Heart right ventricle (tissue), 16 donors: ENCODE measurements at regions of chr4 and their contacts with region 1.

Region 1: GRCh38 chr4:20754036-20754435 is 53.8 kb downstream of the PACRGL start:
- DNase-seq: no peak
- ATAC-seq: no peak
- H3K4me3 ChIP-seq: no peak overlapping the region
- H3K27ac ChIP-seq: no peak overlapping the region
- H3K4me1 ChIP-seq: no peaks in the 10 kb centered on the region
- H3K27me3 ChIP-seq: no peaks in the 10 kb centered on the region
- CTCF ChIP-seq: no peak

Region 2: DNA sequence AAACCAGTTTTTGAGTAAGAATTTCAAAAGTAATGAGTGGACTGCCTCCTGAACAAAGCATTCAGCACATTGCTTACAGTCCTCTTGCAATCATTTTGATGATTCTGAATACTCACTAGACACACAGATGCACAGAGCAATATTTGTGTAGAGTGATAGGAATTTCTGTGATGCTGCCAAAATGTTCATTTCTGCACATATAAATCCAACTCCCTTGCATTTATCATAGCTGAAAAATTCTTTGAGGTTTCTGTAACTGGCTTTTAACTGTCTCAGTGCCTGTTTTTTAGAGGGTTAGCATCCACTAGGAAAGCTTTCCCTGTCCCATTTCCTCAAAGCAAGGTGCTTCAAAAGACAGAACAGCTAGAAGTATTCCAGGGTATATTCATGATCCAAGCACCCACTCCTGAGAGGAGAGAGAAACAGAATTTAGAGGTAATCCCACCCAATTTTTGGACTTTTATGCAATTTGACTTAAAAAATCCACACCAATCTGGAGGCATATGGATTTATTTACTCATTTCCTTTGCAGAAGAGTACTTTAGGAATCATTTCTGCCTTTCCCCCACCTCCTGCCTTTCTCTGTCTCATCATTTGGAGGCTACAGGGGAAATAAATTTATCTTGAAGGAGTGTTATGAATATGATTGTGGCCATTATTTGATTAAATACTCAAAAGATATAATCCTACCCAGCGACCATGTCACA is 736.8 kb before region 1 on chr4:
- intact Hi-C with region 1: loop called in 1 of 10 experiments (anchors 10 kb)
- DNase-seq: no peak
- ATAC-seq: no peak
- H3K4me3 ChIP-seq: no peak overlapping the region
- H3K27ac ChIP-seq: no peak overlapping the region
- H3K4me1 ChIP-seq: no peaks in the 10 kb centered on the region
- H3K27me3 ChIP-seq: no peaks in the 10 kb centered on the region
- CTCF ChIP-seq: no peak

Region 3: DNA sequence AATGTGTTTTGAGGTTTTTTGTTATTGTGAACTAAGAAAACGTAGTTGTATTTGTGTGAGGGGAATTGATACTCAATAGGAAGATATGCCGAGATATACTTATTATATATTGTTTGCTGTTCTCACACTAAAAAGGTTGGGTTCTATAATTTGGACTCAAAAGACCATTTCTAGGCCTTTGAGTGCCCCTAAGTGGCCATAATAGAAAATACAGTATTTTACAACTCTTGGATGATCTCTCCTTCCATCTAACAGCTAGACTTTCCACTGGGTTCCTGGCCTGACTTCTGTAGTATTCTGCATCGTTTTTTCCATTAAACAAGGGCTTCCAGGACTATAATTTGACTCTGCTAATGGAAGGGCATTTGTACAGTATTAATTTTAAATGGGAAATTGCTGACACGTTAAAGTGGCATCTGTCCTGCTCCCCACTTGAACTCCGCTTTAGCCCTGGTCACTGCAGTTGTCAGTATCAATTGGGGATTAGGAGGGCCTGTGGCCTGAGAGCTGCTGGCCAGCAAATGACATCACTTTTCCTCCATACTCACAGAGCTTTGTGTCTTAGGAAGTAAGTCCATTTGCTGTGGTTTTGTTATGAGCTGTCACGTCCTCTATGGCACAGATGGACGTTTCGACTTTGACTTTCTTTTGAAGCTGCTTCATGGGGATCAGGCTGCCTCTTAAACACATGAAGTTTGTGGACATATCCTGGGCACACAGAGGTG is 325.4 kb before region 1 on chr4:
- intact Hi-C with region 1: no loop called
- DNase-seq: no peak
- ATAC-seq: no peak
- H3K4me3 ChIP-seq: no peak overlapping the region
- H3K27ac ChIP-seq: no peak overlapping the region
- H3K4me1 ChIP-seq: no peaks in the 10 kb centered on the region
- H3K27me3 ChIP-seq: no peaks in the 10 kb centered on the region
- CTCF ChIP-seq: peak in 3 of 9 donors; percentile 11 to 31 (median 22)

Region 4: GRCh38 chr4:20506827-20507226 is 247.2 kb before region 1 on chr4:
- intact Hi-C with region 1: no loop called
- DNase-seq: no peak
- ATAC-seq: no peak
- H3K4me3 ChIP-seq: no peak overlapping the region
- H3K27ac ChIP-seq: no peak overlapping the region
- H3K4me1 ChIP-seq: no peaks in the 10 kb centered on the region
- H3K27me3 ChIP-seq: no peaks in the 10 kb centered on the region
- CTCF ChIP-seq: no peak

Region 5: DNA sequence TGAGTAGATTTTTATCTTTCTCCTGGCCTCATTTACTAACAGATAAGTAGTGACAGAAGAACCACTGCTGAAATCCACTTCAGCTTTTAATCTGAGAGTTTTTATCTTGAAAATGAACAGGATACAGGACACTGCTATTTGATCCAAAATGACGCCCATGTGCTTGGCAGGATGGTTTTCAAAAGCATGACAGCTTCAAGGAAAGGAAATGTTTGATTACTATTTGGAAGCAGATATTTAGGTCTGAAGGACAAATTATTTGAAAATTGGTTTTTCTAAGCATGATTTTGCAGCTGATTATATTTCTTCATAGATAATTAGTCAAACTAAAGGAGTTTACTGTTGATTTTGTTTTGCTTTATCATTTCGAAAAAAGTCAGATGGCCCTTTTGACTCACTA is 42.7 kb before region 1 on chr4:
- intact Hi-C with region 1: loop called in 1 of 10 experiments (anchors 1 kb)
- DNase-seq: no peak
- ATAC-seq: no peak
- H3K4me3 ChIP-seq: no peak overlapping the region
- H3K27ac ChIP-seq: no peak overlapping the region
- H3K4me1 ChIP-seq: no peaks in the 10 kb centered on the region
- H3K27me3 ChIP-seq: no peaks in the 10 kb centered on the region
- CTCF ChIP-seq: no peak